HEK293T (cell line): ENCODE measurements at regions of chr6 and their contacts with region 1.

Region 1: DNA sequence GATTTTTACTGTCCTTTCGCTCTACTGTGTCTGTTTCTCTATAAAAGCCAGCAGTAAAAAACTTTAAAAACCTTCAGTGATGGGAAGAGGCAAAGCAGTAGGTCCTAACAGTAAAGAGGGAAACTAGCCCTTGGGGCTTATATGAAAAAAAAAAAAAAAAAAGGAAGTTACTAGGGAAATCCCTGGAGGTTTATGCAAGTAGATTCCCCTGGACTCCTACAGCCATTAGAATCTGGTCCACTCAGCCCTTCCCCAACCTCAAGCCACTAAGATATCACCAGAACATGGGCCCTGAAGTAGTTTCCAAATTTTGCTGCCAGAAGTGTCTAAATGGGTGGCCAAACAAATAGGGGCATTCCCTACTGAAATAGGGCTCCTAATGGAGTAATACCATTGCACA is 70.5 kb upstream of the HINT3 start:
- DNase-seq: no peak

Region 2: GRCh38 chr6:125798734-125799508 is 87.1 kb before region 1 on chr6:
- CTCF ChIA-PET with region 1: no interaction called
- POLR2A ChIA-PET with region 1: no interaction called
- DNase-seq: no peak

Region 3: DNA sequence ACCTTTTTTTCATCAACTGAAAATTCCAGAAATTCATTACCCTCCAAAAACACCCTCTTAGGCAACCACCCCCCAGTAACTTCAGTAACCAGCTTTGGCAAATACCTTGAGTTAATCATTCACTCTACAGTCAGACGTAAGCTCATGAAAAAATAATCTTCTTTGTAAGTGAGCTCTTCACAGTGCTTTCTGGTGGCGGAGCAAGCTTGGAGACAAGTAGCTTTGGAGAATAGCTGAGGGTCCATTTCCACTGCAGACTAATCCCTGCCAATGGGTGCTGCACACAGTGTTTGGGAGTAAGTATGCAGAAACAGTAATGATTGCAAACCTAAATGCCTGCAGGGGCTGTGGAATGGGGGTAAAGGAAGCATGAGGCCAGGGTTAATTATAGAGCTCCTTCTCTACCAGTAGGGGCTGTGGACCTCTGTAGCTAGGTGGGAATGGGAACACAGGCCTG is 13.7 kb after region 1 on chr6:
- CTCF ChIA-PET with region 1: interaction called, 10 read pairs
- POLR2A ChIA-PET with region 1: interaction called, 3 read pairs
- DNase-seq: no peak